WTC11 (cell line): ENCODE measurements at regions of chr1 and their contacts with region 1.

Region 1: GRCh38 chr1:37764414-37764825 is 500 bp downstream of the EPHA10 start:
- DNase-seq: peak; percentile 91
- ATAC-seq: peak; percentile 62
- H3K4me3 Mint-ChIP-seq: peak overlapping the region; percentile 78
- H3K27ac Mint-ChIP-seq: no peak overlapping the region
- H3K4me1 Mint-ChIP-seq: peaks cover 26% of the 10 kb centered on the region
- H3K27me3 Mint-ChIP-seq: peaks cover 84% of the 10 kb centered on the region
- CTCF ChIP-seq: no peak

Region 2: GRCh38 chr1:37692078-37692833 is 72.2 kb before region 1 on chr1 and contains the start of gene CDCA8:
- CTCF ChIA-PET with region 1: interaction called, 40 read pairs
- POLR2A ChIA-PET with region 1: interaction called, 3 read pairs
- DNase-seq: peak; percentile 99
- ATAC-seq: peak; percentile 91
- H3K4me3 Mint-ChIP-seq: peak within 1 kb of the TSS; percentile 98
- H3K27ac Mint-ChIP-seq: peak within 1 kb of the TSS; percentile 78; the same call in 1 of the 2 replicates
- H3K4me1 Mint-ChIP-seq: peaks cover 16% of the 10 kb centered on the region
- H3K27me3 Mint-ChIP-seq: no peaks in the 10 kb centered on the region; the same call in 1 of the 2 replicates
- CTCF ChIP-seq: peak; percentile 27; the same call in 1 of the 2 replicates
- total RNA-seq, gene CDCA8: 42.1 to 47.7 TPM (median 43.3 TPM) in 3 replicates

Region 3: GRCh38 chr1:37723390-37724078 is 40.9 kb before region 1 on chr1:
- CTCF ChIA-PET with region 1: interaction called, 14 read pairs
- POLR2A ChIA-PET with region 1: interaction called, 3 read pairs
- DNase-seq: no peak
- ATAC-seq: peak; percentile 22; the same call in 1 of the 2 replicates
- H3K4me3 Mint-ChIP-seq: no peak overlapping the region
- H3K27ac Mint-ChIP-seq: no peak overlapping the region
- H3K4me1 Mint-ChIP-seq: peaks cover 6% of the 10 kb centered on the region; the same call in 1 of the 2 replicates
- H3K27me3 Mint-ChIP-seq: peaks cover 4% of the 10 kb centered on the region; the same call in 1 of the 2 replicates
- CTCF ChIP-seq: no peak

Region 4: GRCh38 chr1:37807555-37808368 is 43.3 kb after region 1 on chr1 and contains the starts of genes C1orf122 and YRDC:
- CTCF ChIA-PET with region 1: interaction called, 13 read pairs
- POLR2A ChIA-PET with region 1: no interaction called
- DNase-seq: peak; percentile 95
- ATAC-seq: peak; percentile 82
- H3K4me3 Mint-ChIP-seq: peak within 1 kb of the TSS; percentile 88
- H3K27ac Mint-ChIP-seq: peak within 1 kb of the TSS; percentile 78
- H3K4me1 Mint-ChIP-seq: peaks cover 11% of the 10 kb centered on the region; the same call in 1 of the 2 replicates
- H3K27me3 Mint-ChIP-seq: no peaks in the 10 kb centered on the region
- CTCF ChIP-seq: no peak
- total RNA-seq, gene C1orf122: 42.5 to 50.7 TPM (median 45.9 TPM) in 3 replicates
- total RNA-seq, gene YRDC: 20.1 to 24.6 TPM (median 22.7 TPM) in 3 replicates